ENCODE measurements at regions of chr17 and their contacts with region 1.

Region 1: GRCh38 chr17:28967221-28968140 is 16.2 kb upstream of the PHF12 start:
- DNase-seq: no peak
- ATAC-seq: no peak
- H3K4me3 Mint-ChIP-seq: no peak overlapping the region
- H3K27ac Mint-ChIP-seq: no peak overlapping the region
- H3K4me1 Mint-ChIP-seq: no peaks in the 10 kb centered on the region
- H3K27me3 Mint-ChIP-seq: peaks cover 6% of the 10 kb centered on the region

Region 2: GRCh38 chr17:28982131-28982951 is 14.9 kb after region 1 on chr17:
- CTCF ChIA-PET with region 1: interaction called, 19 read pairs
- POLR2A ChIA-PET with region 1: no interaction called
- intact Hi-C with region 1: no loop called
- DNase-seq: peak; percentile 65
- ATAC-seq: peak; percentile 90
- H3K4me3 Mint-ChIP-seq: no peak overlapping the region
- H3K27ac Mint-ChIP-seq: peak overlapping the region; percentile 89
- H3K4me1 Mint-ChIP-seq: peaks cover 23% of the 10 kb centered on the region
- H3K27me3 Mint-ChIP-seq: no peaks in the 10 kb centered on the region

Region 3: GRCh38 chr17:29032857-29033197 is 65.3 kb after region 1 on chr17:
- CTCF ChIA-PET with region 1: interaction called, 13 read pairs
- POLR2A ChIA-PET with region 1: no interaction called
- intact Hi-C with region 1: no loop called
- DNase-seq: no peak
- ATAC-seq: no peak
- H3K4me3 Mint-ChIP-seq: no peak overlapping the region
- H3K27ac Mint-ChIP-seq: no peak overlapping the region
- H3K4me1 Mint-ChIP-seq: no peaks in the 10 kb centered on the region
- H3K27me3 Mint-ChIP-seq: peaks cover 33% of the 10 kb centered on the region

Region 4: DNA sequence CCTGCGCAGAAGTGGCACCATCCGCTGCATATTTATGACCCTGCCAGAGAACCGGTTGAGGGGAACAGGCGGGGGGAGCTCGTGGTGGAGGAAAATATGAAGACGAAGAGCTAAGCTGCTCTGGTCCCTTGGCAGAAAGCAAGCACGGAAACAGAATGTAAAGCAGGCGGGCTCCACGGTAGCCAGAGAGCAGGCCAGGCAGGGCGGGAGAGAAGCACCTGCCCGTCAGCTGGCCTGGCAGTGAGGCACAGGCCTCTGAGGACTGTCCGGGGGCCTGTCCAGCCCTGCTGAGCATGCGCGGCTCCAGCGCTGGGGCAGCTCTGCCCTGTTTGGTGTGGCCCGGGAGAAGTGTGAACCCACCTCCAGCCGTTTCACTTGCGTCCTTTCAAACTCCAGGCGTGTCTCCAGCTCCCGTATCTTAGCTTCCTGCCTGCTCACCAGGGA is 122.1 kb after region 1 on chr17:
- CTCF ChIA-PET with region 1: interaction called, 16 read pairs
- POLR2A ChIA-PET with region 1: no interaction called
- intact Hi-C with region 1: no loop called
- DNase-seq: no peak
- ATAC-seq: no peak
- H3K4me3 Mint-ChIP-seq: no peak overlapping the region
- H3K27ac Mint-ChIP-seq: no peak overlapping the region
- H3K4me1 Mint-ChIP-seq: no peaks in the 10 kb centered on the region
- H3K27me3 Mint-ChIP-seq: no peaks in the 10 kb centered on the region

Region 5: DNA sequence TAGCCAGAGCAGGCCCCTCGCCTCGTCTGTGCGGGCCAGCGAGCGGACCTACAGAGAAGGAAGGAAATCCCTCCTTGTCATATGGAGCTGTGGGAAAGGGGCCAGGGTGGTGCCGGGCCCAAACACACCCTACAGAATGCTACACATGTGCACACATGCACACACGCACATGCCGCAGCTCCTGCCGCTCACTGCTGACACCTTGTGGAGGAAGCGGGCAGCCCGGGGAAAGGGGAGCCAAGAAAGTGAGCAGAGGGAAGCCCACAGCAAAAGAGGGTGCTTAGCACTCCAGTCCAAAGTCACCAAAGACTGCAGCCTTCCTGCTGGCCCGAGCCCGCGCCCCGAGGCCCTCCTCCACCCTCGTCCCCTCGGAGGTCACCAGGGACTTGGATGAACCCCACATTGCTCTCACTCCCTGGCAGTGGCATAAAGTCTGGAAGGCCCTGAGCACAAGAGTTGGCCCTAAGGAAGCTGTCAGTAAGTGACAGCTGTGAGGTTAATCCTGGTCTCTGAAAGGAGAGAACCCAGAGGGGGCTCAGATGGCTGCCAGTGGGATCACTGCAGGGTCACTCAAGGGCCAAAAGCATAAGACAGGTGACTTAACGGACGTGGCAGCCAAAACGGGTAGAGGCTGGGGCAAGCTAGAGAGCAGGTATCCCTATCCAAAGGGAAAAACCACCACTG is 144.5 kb after region 1 on chr17:
- CTCF ChIA-PET with region 1: interaction called, 199 read pairs
- POLR2A ChIA-PET with region 1: interaction called, 6 read pairs
- intact Hi-C with region 1: loop called (anchors 1 kb)
- DNase-seq: peak; percentile 86
- ATAC-seq: peak; percentile 86
- H3K4me3 Mint-ChIP-seq: no peak overlapping the region
- H3K27ac Mint-ChIP-seq: no peak overlapping the region
- H3K4me1 Mint-ChIP-seq: peaks cover 3% of the 10 kb centered on the region
- H3K27me3 Mint-ChIP-seq: no peaks in the 10 kb centered on the region

Measured in activated CD4-positive, alpha-beta T cell treated with anti-CD3 and anti-CD28 coated beads for 36 hours (primary cell).